ENCODE measurements at regions of chr9 and their contacts with region 1.

Region 1: GRCh38 chr9:34048923-34049697 is 423 bp upstream of the UBAP2 start:
- DNase-seq: peak; percentile 97 to 99 (median 97)
- H3K4me3 ChIP-seq: peak overlapping the region; percentile 90 to 100
- H3K4me3 Mint-ChIP-seq: peak overlapping the region; percentile 95 to 99 (median 98)
- H3K27ac ChIP-seq: peak overlapping the region; percentile 88
- H3K27ac Mint-ChIP-seq: peak overlapping the region; percentile 98 to 100 (median 99)
- H3K4me1 ChIP-seq: peaks cover 27% of the 10 kb centered on the region
- H3K4me1 Mint-ChIP-seq: peaks cover 23 to 43% (median 31%) of the 10 kb centered on the region in 4 donors
- H3K27me3 ChIP-seq: no peaks in the 10 kb centered on the region
- H3K27me3 Mint-ChIP-seq: no peaks in the 10 kb centered on the region

Region 2: GRCh38 chr9:34010979-34011378 is 38.1 kb before region 1 on chr9:
- CTCF ChIA-PET with region 1: no interaction called
- POLR2A ChIA-PET with region 1: interaction called, 3 read pairs
- intact Hi-C with region 1: loop called (anchors 5 kb)
- DNase-seq: peak in 4 of 5 donors; percentile 14 to 26 (median 20)
- H3K4me3 ChIP-seq: no peak overlapping the region
- H3K4me3 Mint-ChIP-seq: no peak overlapping the region
- H3K27ac ChIP-seq: no peak overlapping the region
- H3K27ac Mint-ChIP-seq: no peak overlapping the region
- H3K4me1 ChIP-seq: no peaks in the 10 kb centered on the region
- H3K4me1 Mint-ChIP-seq: peaks cover 0 to 4% (median 0%) of the 10 kb centered on the region in 4 donors
- H3K27me3 ChIP-seq: no peaks in the 10 kb centered on the region
- H3K27me3 Mint-ChIP-seq: no peaks in the 10 kb centered on the region

Region 3: GRCh38 chr9:34126207-34127034 is 77.3 kb after region 1 on chr9 and contains the start of gene DCAF12:
- CTCF ChIA-PET with region 1: no interaction called
- POLR2A ChIA-PET with region 1: interaction called, 6 read pairs
- intact Hi-C with region 1: loop called (anchors 1 kb)
- DNase-seq: peak; percentile 90 to 92 (median 91)
- H3K4me3 ChIP-seq: peak within 1 kb of the TSS; percentile 88 to 92
- H3K4me3 Mint-ChIP-seq: peak within 1 kb of the TSS; percentile 96 to 100 (median 98)
- H3K27ac ChIP-seq: peak within 1 kb of the TSS; percentile 83
- H3K27ac Mint-ChIP-seq: peak within 1 kb of the TSS; percentile 95 to 99 (median 99)
- H3K4me1 ChIP-seq: peaks cover 45% of the 10 kb centered on the region
- H3K4me1 Mint-ChIP-seq: peaks cover 39 to 58% (median 45%) of the 10 kb centered on the region in 4 donors
- H3K27me3 ChIP-seq: no peaks in the 10 kb centered on the region
- H3K27me3 Mint-ChIP-seq: no peaks in the 10 kb centered on the region
- total RNA-seq, gene DCAF12: 29.7 to 31.0 TPM

Region 4: DNA sequence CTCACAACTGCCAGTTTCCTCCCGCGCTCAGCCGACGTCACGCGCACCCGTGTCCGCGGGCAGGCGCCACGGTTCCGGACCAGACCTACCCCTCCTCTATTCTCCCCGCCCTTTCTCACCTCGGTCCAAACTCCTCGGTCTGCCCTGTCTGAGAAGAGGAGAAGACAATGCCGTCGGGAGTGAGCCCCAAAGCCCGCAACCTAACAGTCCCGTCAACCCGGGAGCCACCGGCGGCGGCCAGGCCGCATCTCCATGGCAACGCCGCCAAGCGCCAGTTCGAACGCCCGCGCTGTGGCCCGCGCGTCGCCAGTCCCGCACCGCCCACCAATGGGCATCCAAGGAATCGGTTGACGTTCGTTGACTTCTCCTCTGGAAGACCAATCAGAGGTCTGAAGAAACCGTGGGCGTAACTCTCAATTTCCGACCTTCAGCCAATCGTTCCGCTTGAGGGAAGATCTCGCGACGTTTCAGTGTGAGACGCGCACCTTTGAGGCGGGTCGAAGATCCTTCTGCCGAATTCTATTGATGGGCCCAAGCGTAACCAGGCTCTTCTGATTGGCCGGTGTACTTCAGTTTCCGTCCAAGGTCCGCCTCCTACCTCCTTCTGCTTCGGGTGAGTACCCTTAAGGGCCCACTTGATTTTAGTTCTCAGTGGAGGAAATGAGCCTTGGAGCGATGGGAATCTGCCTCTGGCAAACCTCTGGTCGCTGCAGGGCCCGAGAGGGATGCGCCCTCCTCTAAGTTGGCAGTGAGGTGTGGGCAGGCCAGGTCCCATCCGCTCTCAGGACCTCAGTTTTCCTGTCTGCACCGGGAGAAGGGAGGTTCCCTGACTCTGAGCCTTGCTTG is 280.1 kb after region 1 on chr9 and contains the starts of genes KIF24 and NUDT2:
- CTCF ChIA-PET with region 1: no interaction called
- POLR2A ChIA-PET with region 1: interaction called, 3 read pairs
- intact Hi-C with region 1: loop called (anchors 1 kb)
- DNase-seq: peak; percentile 94 to 99 (median 98)
- H3K4me3 ChIP-seq: peak within 1 kb of the TSS; percentile 92 to 100
- H3K4me3 Mint-ChIP-seq: peak within 1 kb of the TSS; percentile 92 to 97 (median 94)
- H3K27ac ChIP-seq: peak within 1 kb of the TSS; percentile 87
- H3K27ac Mint-ChIP-seq: peak within 1 kb of the TSS; percentile 87 to 99 (median 98)
- H3K4me1 ChIP-seq: peaks cover 17% of the 10 kb centered on the region
- H3K4me1 Mint-ChIP-seq: peaks cover 14 to 38% (median 28%) of the 10 kb centered on the region in 4 donors
- H3K27me3 ChIP-seq: no peaks in the 10 kb centered on the region
- H3K27me3 Mint-ChIP-seq: no peaks in the 10 kb centered on the region
- total RNA-seq, gene KIF24: 0.22 to 0.32 TPM
- total RNA-seq, gene NUDT2: 21.0 TPM

Region 5: GRCh38 chr9:34458013-34458958 is 409.2 kb after region 1 on chr9 and contains the starts of genes DNAI1 and FAM219A:
- CTCF ChIA-PET with region 1: no interaction called
- POLR2A ChIA-PET with region 1: no interaction called
- intact Hi-C with region 1: loop called (anchors 5 kb)
- DNase-seq: peak; percentile 98 to 100 (median 99)
- H3K4me3 ChIP-seq: peak within 1 kb of the TSS; percentile 44 to 61
- H3K4me3 Mint-ChIP-seq: peak within 1 kb of the TSS; percentile 90 to 95 (median 92)
- H3K27ac ChIP-seq: peak within 1 kb of the TSS; percentile 5
- H3K27ac Mint-ChIP-seq: peak within 1 kb of the TSS; percentile 49 to 90 (median 88)
- H3K4me1 ChIP-seq: peaks cover 19% of the 10 kb centered on the region
- H3K4me1 Mint-ChIP-seq: peaks cover 18 to 30% (median 24%) of the 10 kb centered on the region in 4 donors
- H3K27me3 ChIP-seq: no peaks in the 10 kb centered on the region
- H3K27me3 Mint-ChIP-seq: no peaks in the 10 kb centered on the region
- total RNA-seq, gene DNAI1: not detected
- total RNA-seq, gene FAM219A: 13.9 to 16.3 TPM

Measured in CD4-positive, alpha-beta memory T cell (primary cell).